Activated CD4-positive, alpha-beta T cell treated with anti-CD3 and anti-CD28 coated beads for 36 hours (primary cell): ENCODE measurements at regions of chr17 and their contacts with region 1.

Region 1: GRCh38 chr17:60640503-60640902 is 37.1 kb upstream of the BCAS3 start:
- DNase-seq: no peak
- ATAC-seq: no peak
- H3K4me3 Mint-ChIP-seq: no peak overlapping the region
- H3K27ac Mint-ChIP-seq: no peak overlapping the region
- H3K4me1 Mint-ChIP-seq: peaks cover 9% of the 10 kb centered on the region
- H3K27me3 Mint-ChIP-seq: no peaks in the 10 kb centered on the region

Region 2: GRCh38 chr17:60571551-60571950 is 69.0 kb before region 1 on chr17:
- CTCF ChIA-PET with region 1: interaction called, 14 read pairs
- POLR2A ChIA-PET with region 1: no interaction called
- intact Hi-C with region 1: loop called in 1 of 2 experiments (anchors 2 kb)
- DNase-seq: no peak
- ATAC-seq: no peak
- H3K4me3 Mint-ChIP-seq: no peak overlapping the region
- H3K27ac Mint-ChIP-seq: no peak overlapping the region
- H3K4me1 Mint-ChIP-seq: no peaks in the 10 kb centered on the region
- H3K27me3 Mint-ChIP-seq: peaks cover 6% of the 10 kb centered on the region

Region 3: DNA sequence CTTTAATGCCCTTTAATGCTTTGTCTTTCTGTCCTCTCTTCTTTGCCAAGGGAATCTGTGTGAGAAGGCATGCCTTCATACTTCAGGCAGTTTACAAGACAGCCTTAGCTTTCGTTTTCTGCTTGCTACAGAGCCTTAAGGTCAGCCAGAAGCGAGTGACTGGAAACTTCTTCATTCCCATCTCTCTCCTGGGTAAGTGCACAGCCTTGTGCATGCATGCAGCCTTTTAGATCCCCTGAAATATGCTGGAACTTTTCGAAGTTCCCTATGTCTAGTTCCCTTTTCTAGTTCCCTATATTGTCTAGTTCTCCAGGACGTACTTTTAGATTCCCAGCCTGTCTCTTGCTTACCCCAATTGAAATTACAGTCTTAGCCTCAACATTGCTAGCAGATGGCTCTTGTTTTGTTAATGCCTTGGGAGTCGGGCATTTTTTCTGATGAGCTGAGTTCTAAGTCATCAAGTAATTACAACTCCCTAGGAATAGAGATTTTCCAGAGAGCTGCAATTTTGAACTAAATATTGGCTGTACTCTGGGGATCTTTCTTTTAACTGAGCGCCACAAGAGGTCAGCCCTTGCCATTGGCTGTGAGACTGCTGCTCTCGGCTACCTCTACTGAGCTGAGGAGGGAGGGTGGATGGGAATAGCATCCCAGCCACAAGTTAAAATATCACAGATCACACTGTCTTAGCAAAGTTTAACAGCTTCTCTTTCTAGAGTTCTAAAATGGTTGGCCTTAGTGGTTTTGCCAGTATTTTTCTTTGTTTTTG is 63.2 kb before region 1 on chr17:
- CTCF ChIA-PET with region 1: interaction called, 6 read pairs
- POLR2A ChIA-PET with region 1: no interaction called
- intact Hi-C with region 1: loop called in 1 of 2 experiments (anchors 2 kb)
- DNase-seq: peak; percentile 25
- ATAC-seq: peak; percentile 61
- H3K4me3 Mint-ChIP-seq: peak overlapping the region; percentile 50
- H3K27ac Mint-ChIP-seq: peak overlapping the region; percentile 4
- H3K4me1 Mint-ChIP-seq: peaks cover 9% of the 10 kb centered on the region
- H3K27me3 Mint-ChIP-seq: peaks cover 1% of the 10 kb centered on the region

Region 4: DNA sequence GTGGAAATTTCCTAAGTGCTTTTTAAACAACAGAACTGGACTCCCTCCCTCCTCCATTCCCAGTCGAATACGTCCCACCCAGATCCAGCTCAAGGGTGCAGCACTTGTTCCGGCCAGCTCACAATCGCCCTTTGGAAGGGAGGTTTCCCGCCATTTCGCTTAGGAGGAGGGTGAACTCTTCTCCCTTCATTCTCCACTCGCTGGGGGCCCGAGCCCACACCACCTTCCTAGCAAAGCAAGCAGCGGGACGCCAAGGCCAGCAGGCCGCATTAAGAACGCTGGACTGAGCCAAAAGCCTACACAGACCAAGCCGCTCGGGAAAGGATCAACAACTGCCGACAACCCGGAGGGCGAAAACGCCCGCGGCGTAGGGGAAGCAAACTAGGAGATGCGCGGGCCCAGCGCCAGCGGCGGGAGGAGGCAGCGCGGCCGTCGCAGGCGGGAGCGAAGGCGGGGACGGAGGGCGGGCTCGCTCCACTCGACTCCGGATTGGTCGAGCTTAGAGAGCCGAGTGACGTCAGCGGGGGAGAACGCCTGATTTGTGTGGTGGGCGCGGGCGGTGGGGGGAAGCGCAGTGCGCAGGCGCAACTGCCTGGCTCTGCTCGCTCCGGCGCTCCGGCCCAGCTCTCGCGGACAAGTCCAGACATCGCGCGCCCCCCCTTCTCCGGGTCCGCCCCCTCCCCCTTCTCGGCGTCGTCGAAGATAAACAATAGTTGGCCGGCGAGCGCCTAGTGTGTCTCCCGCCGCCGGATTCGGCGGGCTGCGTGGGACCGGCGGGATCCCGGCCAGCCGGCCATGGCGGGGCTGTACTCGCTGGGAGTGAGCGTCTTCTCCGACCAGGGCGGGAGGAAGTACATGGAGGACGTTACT is 40.6 kb before region 1 on chr17 and contains the start of gene PPM1D:
- CTCF ChIA-PET with region 1: interaction called, 8 read pairs
- POLR2A ChIA-PET with region 1: interaction called, 8 read pairs
- intact Hi-C with region 1: loop called (anchors 1 to 2 kb)
- DNase-seq: peak; percentile 99
- ATAC-seq: peak; percentile 94
- H3K4me3 Mint-ChIP-seq: peak within 1 kb of the TSS; percentile 95
- H3K27ac Mint-ChIP-seq: peak within 1 kb of the TSS; percentile 97
- H3K4me1 Mint-ChIP-seq: peaks cover 31% of the 10 kb centered on the region
- H3K27me3 Mint-ChIP-seq: no peaks in the 10 kb centered on the region
- total RNA-seq, gene PPM1D: 9.3 to 9.7 TPM

Region 5: GRCh38 chr17:60615840-60616239 is 24.7 kb before region 1 on chr17:
- CTCF ChIA-PET with region 1: interaction called, 13 read pairs
- POLR2A ChIA-PET with region 1: no interaction called
- intact Hi-C with region 1: no loop called
- DNase-seq: no peak
- ATAC-seq: no peak
- H3K4me3 Mint-ChIP-seq: no peak overlapping the region
- H3K27ac Mint-ChIP-seq: no peak overlapping the region
- H3K4me1 Mint-ChIP-seq: peaks cover 20% of the 10 kb centered on the region
- H3K27me3 Mint-ChIP-seq: no peaks in the 10 kb centered on the region

Region 6: DNA sequence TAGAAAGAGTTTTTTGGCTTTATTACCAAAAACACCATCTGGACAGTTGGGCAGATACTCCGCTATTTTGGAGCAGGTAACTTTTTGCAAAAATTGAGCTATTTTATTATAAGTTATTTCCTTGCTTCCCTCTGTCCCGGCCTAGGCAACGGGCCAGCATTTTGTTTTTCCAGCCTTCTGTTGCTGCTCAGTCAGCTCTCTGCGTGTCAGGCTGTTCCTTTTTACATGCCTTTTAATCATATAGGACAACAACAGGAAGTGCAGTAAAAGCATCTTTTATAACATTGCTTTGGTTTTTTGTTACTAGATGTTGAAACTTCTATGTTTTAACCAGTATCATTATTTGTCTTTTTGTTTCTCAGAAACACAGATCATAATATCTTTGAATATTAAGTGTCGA is 10.2 kb before region 1 on chr17:
- CTCF ChIA-PET with region 1: interaction called, 12 read pairs
- POLR2A ChIA-PET with region 1: no interaction called
- intact Hi-C with region 1: no loop called
- DNase-seq: no peak
- ATAC-seq: no peak
- H3K4me3 Mint-ChIP-seq: no peak overlapping the region
- H3K27ac Mint-ChIP-seq: no peak overlapping the region
- H3K4me1 Mint-ChIP-seq: peaks cover 11% of the 10 kb centered on the region
- H3K27me3 Mint-ChIP-seq: no peaks in the 10 kb centered on the region

Region 7: DNA sequence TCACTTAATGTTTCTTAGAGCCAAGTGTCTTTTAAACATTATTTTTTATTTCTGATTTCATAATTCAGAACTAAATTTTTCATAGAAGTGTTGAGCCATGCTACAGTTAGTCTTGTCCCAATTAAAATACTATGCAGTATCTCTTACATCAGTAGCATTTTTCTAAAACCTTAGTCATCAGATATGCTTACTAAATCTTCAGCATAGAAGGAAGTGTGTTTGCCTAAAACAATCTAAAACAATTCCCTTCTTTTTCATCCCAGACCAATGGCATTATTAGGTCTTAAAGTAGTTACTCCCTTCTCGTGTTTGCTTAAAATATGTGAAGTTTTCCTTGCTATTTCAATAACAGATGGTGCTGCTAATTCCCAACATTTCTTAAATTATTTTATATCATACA is 23.5 kb after region 1 on chr17:
- CTCF ChIA-PET with region 1: interaction called, 14 read pairs
- POLR2A ChIA-PET with region 1: no interaction called
- intact Hi-C with region 1: no loop called
- DNase-seq: no peak
- ATAC-seq: no peak
- H3K4me3 Mint-ChIP-seq: no peak overlapping the region
- H3K27ac Mint-ChIP-seq: no peak overlapping the region
- H3K4me1 Mint-ChIP-seq: no peaks in the 10 kb centered on the region
- H3K27me3 Mint-ChIP-seq: no peaks in the 10 kb centered on the region

Region 8: GRCh38 chr17:60750640-60751039 is 110.1 kb after region 1 on chr17:
- CTCF ChIA-PET with region 1: no interaction called
- POLR2A ChIA-PET with region 1: no interaction called
- intact Hi-C with region 1: no loop called
- DNase-seq: no peak
- ATAC-seq: no peak
- H3K4me3 Mint-ChIP-seq: no peak overlapping the region
- H3K27ac Mint-ChIP-seq: no peak overlapping the region
- H3K4me1 Mint-ChIP-seq: no peaks in the 10 kb centered on the region
- H3K27me3 Mint-ChIP-seq: no peaks in the 10 kb centered on the region

Region 9: DNA sequence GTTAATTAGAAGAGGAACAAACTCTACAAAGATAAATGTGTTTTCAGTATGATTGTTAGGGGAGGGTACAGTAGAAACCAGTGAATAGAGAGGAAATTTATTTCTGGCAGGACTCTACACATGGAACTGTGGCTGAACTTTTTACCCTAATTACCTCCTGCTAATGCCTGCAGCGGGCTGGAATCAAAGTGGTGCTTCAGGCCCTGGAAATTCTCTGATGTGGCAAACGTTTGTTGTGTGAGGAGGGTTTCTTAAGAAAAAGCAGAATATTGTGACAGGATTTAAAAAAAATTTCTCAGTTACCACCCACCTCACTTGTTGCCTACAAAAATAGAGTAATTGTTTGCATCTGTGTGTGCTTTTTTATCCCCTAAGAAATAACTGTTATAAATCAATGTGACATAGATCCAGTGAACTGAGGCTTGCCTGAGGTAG is 191.7 kb after region 1 on chr17:
- CTCF ChIA-PET with region 1: no interaction called
- POLR2A ChIA-PET with region 1: no interaction called
- intact Hi-C with region 1: no loop called
- DNase-seq: no peak
- ATAC-seq: no peak
- H3K4me3 Mint-ChIP-seq: no peak overlapping the region
- H3K27ac Mint-ChIP-seq: no peak overlapping the region
- H3K4me1 Mint-ChIP-seq: peaks cover 2% of the 10 kb centered on the region
- H3K27me3 Mint-ChIP-seq: no peaks in the 10 kb centered on the region